ENCODE measurements at regions of chr4 and their contacts with region 1.

Region 1: DNA sequence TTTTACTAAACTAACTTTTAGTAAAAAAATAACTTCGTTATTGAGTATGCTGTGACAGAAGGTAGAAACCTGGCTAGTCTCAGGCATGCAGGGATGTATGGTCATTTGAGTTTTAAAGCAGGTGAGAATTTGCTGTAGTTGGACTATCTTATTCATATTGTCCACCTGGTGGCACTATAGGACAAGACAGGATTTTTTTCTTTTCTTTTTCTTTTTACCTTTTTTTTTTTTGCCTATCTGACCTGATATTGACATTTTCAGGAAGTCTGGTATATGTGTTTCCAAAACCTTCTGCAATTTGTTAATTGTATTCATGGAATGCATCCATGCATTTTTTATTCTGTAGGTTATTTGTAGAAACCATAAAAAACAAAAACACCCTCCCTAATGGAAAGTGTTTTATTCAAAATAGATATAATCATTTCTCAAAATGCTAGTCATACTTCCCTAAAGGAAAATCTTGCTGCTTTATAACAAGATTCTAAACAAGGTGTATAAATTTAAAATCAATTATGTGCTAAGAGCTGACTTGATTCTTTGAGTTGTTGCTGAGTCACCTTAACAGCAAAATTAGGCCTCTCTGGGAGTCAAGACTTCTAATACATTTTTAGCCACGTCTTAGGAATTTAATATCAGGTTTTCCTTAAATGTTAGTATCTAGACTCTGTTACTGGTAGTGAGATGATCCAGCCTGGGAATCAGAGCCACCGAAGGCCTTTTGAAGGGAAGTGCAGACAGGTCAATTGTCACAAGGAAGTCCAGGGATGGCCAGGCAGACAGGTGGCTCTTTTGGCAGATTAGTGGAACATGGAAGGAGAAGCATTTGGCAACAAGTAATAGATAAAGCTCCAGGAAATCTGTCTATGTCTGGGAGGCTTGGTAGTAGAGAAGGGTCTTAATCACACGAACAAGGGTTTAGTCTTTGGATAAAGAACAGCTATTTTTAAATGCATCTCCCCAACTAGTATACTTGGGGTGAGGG is 201.3 kb upstream of the GNPDA2 start:
- DNase-seq: peak; percentile 39
- H3K4me3 ChIP-seq: no peak overlapping the region
- H3K27ac ChIP-seq: no peak overlapping the region
- H3K4me1 ChIP-seq: no peaks in the 10 kb centered on the region
- H3K27me3 ChIP-seq: no peaks in the 10 kb centered on the region
- CTCF ChIP-seq: peak; percentile 65 to 69

Region 2: DNA sequence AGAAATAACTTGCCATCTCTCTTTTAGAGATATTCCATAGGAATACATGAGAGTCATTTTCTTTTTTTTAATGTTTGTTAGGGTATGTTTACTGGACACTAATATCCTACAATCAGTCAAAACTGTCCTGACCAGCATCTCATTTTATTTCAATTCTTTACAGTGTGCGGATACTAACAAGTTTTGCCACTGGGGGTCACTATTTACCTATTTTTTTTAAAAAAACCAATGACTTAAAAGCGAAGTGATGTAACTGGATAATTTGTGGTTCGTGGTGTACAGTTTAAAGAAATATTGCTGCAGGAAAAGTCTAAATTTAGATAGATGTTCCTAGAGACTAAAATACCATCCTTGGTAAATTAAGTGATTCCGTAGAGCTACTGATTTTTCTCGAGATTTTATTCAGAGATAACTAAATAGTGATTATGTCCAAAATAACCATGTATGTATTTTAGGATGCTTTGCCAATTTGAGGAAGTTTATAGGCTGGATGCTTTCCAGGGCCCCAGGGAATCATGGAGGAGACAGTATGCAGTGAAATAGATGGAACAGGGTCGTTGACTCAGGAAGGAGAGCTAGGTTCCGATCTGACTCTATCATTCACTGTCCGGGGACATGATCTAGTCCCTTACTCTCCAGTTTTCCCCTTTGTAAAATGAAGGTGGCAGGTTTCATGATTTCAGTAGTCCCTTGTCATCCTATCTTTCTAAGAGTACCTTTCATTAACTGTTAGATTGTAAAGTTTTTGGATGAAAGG is 167.4 kb before region 1 on chr4:
- CTCF ChIA-PET with region 1: no interaction called
- dilution Hi-C with region 1: no loop called
- in situ Hi-C with region 1: no loop called
- intact Hi-C with region 1: loop called (anchors 5 kb)
- DNase-seq: peak; percentile 12
- H3K4me3 ChIP-seq: no peak overlapping the region
- H3K27ac ChIP-seq: no peak overlapping the region
- H3K4me1 ChIP-seq: peaks cover 4% of the 10 kb centered on the region
- H3K27me3 ChIP-seq: no peaks in the 10 kb centered on the region
- CTCF ChIP-seq: peak; percentile 44 to 47

Region 3: GRCh38 chr4:45033676-45034419 is 106.2 kb after region 1 on chr4:
- CTCF ChIA-PET with region 1: no interaction called
- dilution Hi-C with region 1: no loop called
- in situ Hi-C with region 1: no loop called
- intact Hi-C with region 1: no loop called
- DNase-seq: no peak
- H3K4me3 ChIP-seq: no peak overlapping the region
- H3K27ac ChIP-seq: no peak overlapping the region
- H3K4me1 ChIP-seq: peaks cover 3% of the 10 kb centered on the region
- H3K27me3 ChIP-seq: no peaks in the 10 kb centered on the region
- CTCF ChIP-seq: no peak

Region 4: GRCh38 chr4:45331802-45332201 is 404.1 kb after region 1 on chr4:
- CTCF ChIA-PET with region 1: interaction called, 3 read pairs
- dilution Hi-C with region 1: no loop called
- in situ Hi-C with region 1: no loop called
- intact Hi-C with region 1: loop called (anchors 1 kb)
- DNase-seq: no peak
- H3K4me3 ChIP-seq: no peak overlapping the region
- H3K27ac ChIP-seq: no peak overlapping the region
- H3K4me1 ChIP-seq: no peaks in the 10 kb centered on the region
- H3K27me3 ChIP-seq: no peaks in the 10 kb centered on the region
- CTCF ChIP-seq: no peak

Region 5: GRCh38 chr4:45442466-45442865 is 514.8 kb after region 1 on chr4:
- CTCF ChIA-PET with region 1: no interaction called
- dilution Hi-C with region 1: no loop called
- in situ Hi-C with region 1: loop called in 1 of 2 experiments (anchors 25 kb)
- intact Hi-C with region 1: loop called (anchors 1 kb)
- DNase-seq: peak; percentile 31
- H3K4me3 ChIP-seq: no peak overlapping the region
- H3K27ac ChIP-seq: no peak overlapping the region
- H3K4me1 ChIP-seq: peaks cover 3% of the 10 kb centered on the region
- H3K27me3 ChIP-seq: no peaks in the 10 kb centered on the region
- CTCF ChIP-seq: peak; percentile 40 to 59

Region 6: GRCh38 chr4:45453258-45453853 is 525.7 kb after region 1 on chr4:
- CTCF ChIA-PET with region 1: no interaction called
- dilution Hi-C with region 1: no loop called
- in situ Hi-C with region 1: loop called in 1 of 2 experiments (anchors 25 kb)
- intact Hi-C with region 1: loop called (anchors 1 kb)
- DNase-seq: peak; percentile 54
- H3K4me3 ChIP-seq: no peak overlapping the region
- H3K27ac ChIP-seq: no peak overlapping the region
- H3K4me1 ChIP-seq: no peaks in the 10 kb centered on the region
- H3K27me3 ChIP-seq: no peaks in the 10 kb centered on the region
- CTCF ChIP-seq: peak; percentile 60 to 73

Region 7: GRCh38 chr4:45971108-45971507 is 1043.4 kb after region 1 on chr4:
- CTCF ChIA-PET with region 1: no interaction called
- dilution Hi-C with region 1: no loop called
- in situ Hi-C with region 1: no loop called
- intact Hi-C with region 1: loop called (anchors 5 kb)
- DNase-seq: peak; percentile 29
- H3K4me3 ChIP-seq: no peak overlapping the region
- H3K27ac ChIP-seq: no peak overlapping the region
- H3K4me1 ChIP-seq: no peaks in the 10 kb centered on the region
- H3K27me3 ChIP-seq: no peaks in the 10 kb centered on the region
- CTCF ChIP-seq: peak in 1 of 2 donors; percentile 6

Region 8: GRCh38 chr4:46270986-46271596 is 1343.4 kb after region 1 on chr4:
- CTCF ChIA-PET with region 1: no interaction called
- dilution Hi-C with region 1: no loop called
- in situ Hi-C with region 1: no loop called
- intact Hi-C with region 1: loop called (anchors 5 kb)
- DNase-seq: peak; percentile 21
- H3K4me3 ChIP-seq: no peak overlapping the region
- H3K27ac ChIP-seq: no peak overlapping the region
- H3K4me1 ChIP-seq: no peaks in the 10 kb centered on the region
- H3K27me3 ChIP-seq: no peaks in the 10 kb centered on the region
- CTCF ChIP-seq: peak; percentile 46 to 58